ENCODE measurements at regions of chr4 and their contacts with region 1.

Region 1: DNA sequence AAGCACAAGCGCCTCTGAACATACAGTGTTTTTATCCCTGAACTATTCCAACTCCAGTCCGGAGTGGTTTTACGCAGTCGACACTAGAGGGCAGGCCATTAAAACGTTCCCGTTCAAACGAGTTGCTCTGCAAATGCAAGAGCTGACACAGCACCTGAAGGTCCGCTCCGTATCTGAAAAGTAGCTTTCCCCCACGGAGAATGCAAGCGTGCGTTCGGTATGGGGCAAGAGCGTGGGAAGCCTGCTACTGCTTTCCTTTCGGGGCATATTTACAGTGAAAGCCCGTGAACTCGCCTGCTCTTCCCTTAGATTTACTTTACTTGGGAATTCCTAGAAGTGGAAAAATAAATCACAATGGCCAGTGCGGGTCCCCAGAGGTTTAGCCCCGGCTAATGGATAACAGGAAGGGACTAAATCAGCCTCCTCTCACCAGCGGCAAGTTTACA is 190.8 kb downstream of the TSPAN5 start:
- DNase-seq: peak; percentile 56 to 96 (median 78)

Region 2: GRCh38 chr4:98332017-98332416 is 135.6 kb before region 1 on chr4:
- intact Hi-C with region 1: no loop called
- DNase-seq: no peak

Region 3: DNA sequence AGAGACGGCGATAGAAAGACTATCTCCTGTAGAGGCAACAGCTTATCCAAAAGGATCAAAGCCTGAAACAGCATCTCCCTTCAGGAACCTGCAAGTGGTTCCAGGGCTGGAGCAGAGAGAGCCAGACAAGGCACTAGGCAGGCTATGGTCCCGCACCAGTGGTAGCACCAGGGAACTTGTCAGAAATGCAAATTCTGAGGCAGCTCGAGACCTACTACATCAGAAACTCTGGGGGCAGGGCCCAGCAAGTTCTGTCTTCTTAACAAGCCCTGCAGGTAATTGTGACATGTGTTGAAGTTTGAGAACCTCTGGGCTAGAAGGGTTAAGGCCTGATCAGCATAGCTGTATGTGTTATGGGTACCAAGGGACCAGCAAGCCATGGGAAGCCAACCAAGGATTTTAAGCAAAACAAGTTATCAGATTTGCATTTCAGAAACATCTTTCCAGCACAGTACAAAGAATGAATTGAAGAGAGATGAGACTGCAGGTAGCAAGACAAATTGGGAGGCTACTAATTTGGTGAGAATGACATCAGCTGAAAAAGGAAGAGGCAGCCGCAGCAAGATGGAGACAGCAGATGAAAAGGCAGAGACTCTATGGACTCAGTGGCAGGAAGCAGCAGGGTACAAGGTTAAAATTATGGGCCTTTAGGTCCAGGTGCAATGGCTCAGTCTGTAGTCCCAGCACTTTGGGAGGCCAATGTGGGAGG is 51.1 kb after region 1 on chr4:
- intact Hi-C with region 1: no loop called
- DNase-seq: no peak

Region 4: GRCh38 chr4:98557194-98557892 is 89.7 kb after region 1 on chr4:
- intact Hi-C with region 1: loop called (anchors 5 kb)
- DNase-seq: peak in 1 of 10 donors; percentile 45

Region 5: GRCh38 chr4:98995183-98996055 is 527.8 kb after region 1 on chr4 and contains the start of gene METAP1:
- intact Hi-C with region 1: loop called (anchors 2 kb)
- DNase-seq: peak; percentile 78 to 99 (median 90)

Region 6: GRCh38 chr4:99054428-99054994 is 586.9 kb after region 1 on chr4:
- intact Hi-C with region 1: loop called (anchors 5 kb)
- DNase-seq: no peak